ENCODE measurements at regions of chr7 and their contacts with region 1.

Region 1: GRCh38 chr7:99083068-99083651 is 60.7 kb downstream of the SMURF1 start:
- DNase-seq: no peak
- H3K4me3 ChIP-seq: no peak overlapping the region
- H3K27ac ChIP-seq: no peak overlapping the region
- H3K4me1 ChIP-seq: peaks cover 5% of the 10 kb centered on the region
- H3K27me3 ChIP-seq: no peaks in the 10 kb centered on the region
- CTCF ChIP-seq: no peak
- POLR2A ChIP-seq: no peak

Region 2: DNA sequence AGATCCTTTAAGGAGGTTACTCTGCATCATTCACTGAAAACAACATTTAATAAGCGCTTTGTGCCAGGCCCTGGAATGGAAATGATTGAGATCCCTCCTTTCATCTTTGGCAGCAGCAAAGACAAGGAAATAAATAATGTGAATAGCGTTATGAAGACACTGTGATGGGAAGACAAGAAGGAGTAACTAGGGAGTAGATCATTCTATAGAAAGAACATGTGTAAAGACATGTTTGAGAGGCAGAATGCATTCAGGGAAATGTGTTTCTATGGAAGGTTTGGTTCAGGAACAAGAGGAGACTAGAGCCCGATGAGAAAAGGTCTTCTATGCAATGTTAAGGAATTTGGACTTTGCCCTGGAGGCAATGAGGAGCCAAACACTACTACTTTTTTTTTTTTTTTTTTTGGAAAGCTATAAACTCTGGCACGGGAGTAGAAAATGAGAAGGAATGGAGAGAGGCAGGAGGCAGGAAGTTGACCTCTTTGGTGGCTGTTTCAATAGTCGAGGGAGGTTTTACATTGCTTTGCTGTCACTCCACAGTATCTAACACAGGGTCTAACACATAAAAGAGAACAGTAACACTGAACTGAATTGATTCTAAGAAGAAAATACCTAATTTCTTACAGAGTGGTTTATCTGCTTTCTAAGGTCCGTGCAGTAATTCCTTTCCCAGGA is 15.8 kb after region 1 on chr7:
- CTCF ChIA-PET with region 1: no interaction called
- POLR2A ChIA-PET with region 1: no interaction called
- dilution Hi-C with region 1: no loop called
- intact Hi-C with region 1: loop called (anchors 2 kb)
- DNase-seq: no peak
- H3K4me3 ChIP-seq: no peak overlapping the region
- H3K27ac ChIP-seq: no peak overlapping the region
- H3K4me1 ChIP-seq: peaks cover 19% of the 10 kb centered on the region
- H3K27me3 ChIP-seq: no peaks in the 10 kb centered on the region
- CTCF ChIP-seq: no peak
- POLR2A ChIP-seq: no peak

Measured in endothelial cell of umbilical vein (primary cell).